ENCODE measurements at regions of chr10 and their contacts with region 1.

Region 1: DNA sequence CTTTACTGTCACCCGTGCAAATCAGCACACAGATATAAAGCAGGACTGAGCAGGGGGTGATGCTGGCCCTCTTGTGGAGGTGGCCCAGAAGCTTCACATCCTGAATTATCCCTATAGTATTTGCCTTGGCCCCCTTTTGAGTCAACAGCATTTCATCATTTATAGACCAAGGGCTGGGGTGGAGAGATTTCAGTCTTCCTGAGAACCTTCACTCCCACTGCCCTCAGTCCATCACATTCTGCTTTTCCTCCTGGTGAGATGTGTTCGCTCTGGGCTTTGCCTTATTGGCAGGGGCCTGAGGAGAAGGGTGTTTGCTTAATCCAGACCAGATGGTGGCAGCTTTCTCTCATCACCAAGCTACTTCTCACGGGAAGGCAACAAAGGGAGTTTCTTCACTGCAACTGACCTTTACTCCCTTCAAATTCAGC is 47.7 kb downstream of the NOC3L start:
- DNase-seq: no peak
- ATAC-seq: peak in 3 of 8 donors; percentile 12 to 34 (median 20)
- H3K4me3 ChIP-seq: no peak overlapping the region
- H3K27ac ChIP-seq: peak overlapping the region in 4 of 10 donors; percentile 15 to 35 (median 24)
- H3K4me1 ChIP-seq: peaks cover 0 to 24% (median 0%) of the 10 kb centered on the region in 9 donors
- H3K27me3 ChIP-seq: no peaks in the 10 kb centered on the region
- CTCF ChIP-seq: no peak

Region 2: DNA sequence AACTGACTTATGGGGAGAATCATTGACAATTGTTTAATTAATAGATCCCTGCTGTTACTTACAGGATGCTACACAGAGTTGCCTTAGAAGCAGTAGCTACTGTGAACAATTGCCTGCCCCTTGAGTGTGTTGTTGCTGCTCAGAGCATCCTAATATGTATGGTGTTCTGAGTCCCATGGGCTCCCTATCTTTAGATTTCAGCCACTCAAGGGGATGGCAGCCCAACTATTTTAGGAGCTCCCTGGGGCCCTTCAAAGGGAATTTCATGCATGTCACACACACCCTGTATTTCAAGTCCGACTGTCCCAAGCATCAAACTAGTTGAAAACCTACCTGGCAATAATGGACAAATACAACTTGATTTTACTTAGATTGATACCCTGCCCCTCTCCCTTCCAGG is 63.5 kb before region 1 on chr10:
- intact Hi-C with region 1: no loop called
- DNase-seq: no peak
- ATAC-seq: peak in 6 of 8 donors; percentile 35 to 74 (median 60)
- H3K4me3 ChIP-seq: no peak overlapping the region
- H3K27ac ChIP-seq: no peak overlapping the region
- H3K4me1 ChIP-seq: peaks cover 0 to 18% (median 10%) of the 10 kb centered on the region in 9 donors
- H3K27me3 ChIP-seq: no peaks in the 10 kb centered on the region
- CTCF ChIP-seq: no peak

Region 3: DNA sequence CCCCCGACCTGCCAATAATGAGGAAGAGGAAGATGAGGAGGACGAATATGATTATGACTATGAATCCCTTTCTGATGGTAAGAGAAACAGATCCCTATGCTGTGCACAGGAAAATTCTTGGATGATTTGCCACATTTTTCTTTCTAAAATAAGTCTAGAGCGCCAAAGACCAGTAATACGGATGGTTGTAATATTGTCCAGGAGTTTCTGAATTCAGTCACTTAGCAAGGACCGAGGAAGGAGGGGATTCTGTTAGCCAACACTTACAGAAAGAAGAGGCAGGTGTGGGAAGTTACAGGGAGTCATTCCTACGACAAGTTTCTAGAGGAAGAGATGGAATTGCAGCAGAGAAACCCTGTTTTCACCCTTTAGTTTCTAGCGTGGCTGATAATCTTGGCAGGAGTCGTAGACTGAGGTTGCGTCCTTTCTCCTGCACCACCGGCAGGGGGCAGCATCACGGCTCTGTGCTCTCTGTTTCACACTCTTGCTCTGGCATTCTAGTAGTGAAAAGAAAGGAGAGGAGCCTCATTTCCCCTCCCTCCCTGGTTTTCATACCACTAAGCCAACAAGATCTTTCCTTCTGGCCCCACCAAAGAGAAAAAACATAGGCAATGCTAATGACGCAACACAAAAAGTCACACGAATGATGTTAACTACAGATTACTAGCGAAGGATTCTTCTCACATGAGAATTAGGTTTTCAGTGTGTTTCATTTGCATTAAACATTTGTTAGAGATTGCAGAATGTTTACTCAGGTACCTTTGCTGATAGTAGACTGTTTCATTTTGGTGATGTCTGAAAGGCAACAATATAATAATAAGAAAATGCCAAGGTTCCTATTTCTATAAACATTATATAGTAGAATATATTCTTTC is 35.0 kb before region 1 on chr10:
- intact Hi-C with region 1: loop called in 1 of 10 experiments (anchors 5 kb)
- DNase-seq: peak; percentile 22 to 59
- ATAC-seq: peak in 6 of 8 donors; percentile 43 to 87 (median 68)
- H3K4me3 ChIP-seq: no peak overlapping the region
- H3K27ac ChIP-seq: no peak overlapping the region
- H3K4me1 ChIP-seq: peaks cover 0 to 21% (median 7%) of the 10 kb centered on the region in 9 donors
- H3K27me3 ChIP-seq: no peaks in the 10 kb centered on the region
- CTCF ChIP-seq: peak; percentile 72 to 96 (median 86)

Measured in heart right ventricle (tissue), 16 donors.